ENCODE measurements at regions of chr9 and their contacts with region 1.

Region 1: GRCh38 chr9:130549093-130549735 is 30.2 kb upstream of the FUBP3 start:
- DNase-seq: no peak
- ATAC-seq: no peak
- H3K4me3 ChIP-seq: no peak overlapping the region
- H3K27ac ChIP-seq: no peak overlapping the region
- H3K4me1 ChIP-seq: no peaks in the 10 kb centered on the region
- H3K27me3 ChIP-seq: peaks cover 0 to 16% (median 0%) of the 10 kb centered on the region in 3 donors
- CTCF ChIP-seq: no peak

Region 2: DNA sequence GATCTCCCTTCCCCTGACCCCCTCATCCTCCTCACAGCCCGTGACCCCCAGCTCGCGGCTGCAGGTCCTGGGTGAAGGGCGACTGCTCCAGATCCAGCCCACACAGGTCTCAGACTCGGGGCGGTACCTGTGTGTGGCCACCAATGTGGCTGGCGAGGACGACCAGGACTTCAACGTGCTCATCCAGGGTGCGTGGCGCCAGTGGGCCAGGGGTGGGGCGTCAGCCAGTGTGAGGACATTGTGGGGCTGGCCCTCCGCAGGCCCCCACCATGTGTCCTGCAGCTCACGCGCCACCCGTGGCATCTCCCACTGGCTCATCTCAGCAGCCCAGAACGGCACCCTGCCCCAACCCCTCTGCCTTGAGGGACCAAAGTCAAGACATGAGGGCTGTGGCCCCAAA is 171.6 kb before region 1 on chr9:
- intact Hi-C with region 1: loop called in 1 of 2 experiments (anchors 2 kb)
- DNase-seq: no peak
- ATAC-seq: no peak
- H3K4me3 ChIP-seq: no peak overlapping the region
- H3K27ac ChIP-seq: no peak overlapping the region
- H3K4me1 ChIP-seq: no peaks in the 10 kb centered on the region
- H3K27me3 ChIP-seq: peaks cover 0 to 5% (median 0%) of the 10 kb centered on the region in 3 donors
- CTCF ChIP-seq: no peak